Transverse colon (tissue), 4 donors: ENCODE measurements at regions of chr1 and their contacts with region 1.

Region 1: GRCh38 chr1:11838349-11839272 is 9.0 kb downstream of the NPPA start:
- DNase-seq: peak; percentile 71
- H3K4me3 ChIP-seq: no peak overlapping the region
- H3K27ac ChIP-seq: no peak overlapping the region
- H3K4me1 ChIP-seq: no peaks in the 10 kb centered on the region
- H3K27me3 ChIP-seq: no peaks in the 10 kb centered on the region
- CTCF ChIP-seq: peak; percentile 91 to 96 (median 95)
- EP300 ChIP-seq: no peak
- POLR2A ChIP-seq: no peak

Region 2: GRCh38 chr1:10232163-10232562 is 1606.4 kb before region 1 on chr1:
- in situ Hi-C with region 1: no loop called
- intact Hi-C with region 1: loop called (anchors 5 kb)
- DNase-seq: no peak
- H3K4me3 ChIP-seq: no peak overlapping the region
- H3K27ac ChIP-seq: peak overlapping the region in 1 of 4 donors; percentile 29
- H3K4me1 ChIP-seq: peaks cover 0 to 23% (median 5%) of the 10 kb centered on the region in 4 donors
- H3K27me3 ChIP-seq: no peaks in the 10 kb centered on the region
- CTCF ChIP-seq: no peak
- EP300 ChIP-seq: no peak
- POLR2A ChIP-seq: no peak

Region 3: GRCh38 chr1:11893907-11894251 is 55.3 kb after region 1 on chr1:
- in situ Hi-C with region 1: loop called in 1 of 4 experiments (anchors 10 kb)
- intact Hi-C with region 1: loop called (anchors 5 kb)
- DNase-seq: peak; percentile 63
- H3K4me3 ChIP-seq: no peak overlapping the region
- H3K27ac ChIP-seq: no peak overlapping the region
- H3K4me1 ChIP-seq: no peaks in the 10 kb centered on the region
- H3K27me3 ChIP-seq: peaks cover 52% of the 10 kb centered on the region
- CTCF ChIP-seq: peak; percentile 74 to 88 (median 81)
- EP300 ChIP-seq: no peak
- POLR2A ChIP-seq: no peak

Region 4: GRCh38 chr1:11907275-11908094 is 68.9 kb after region 1 on chr1:
- in situ Hi-C with region 1: no loop called
- intact Hi-C with region 1: loop called (anchors 5 kb)
- DNase-seq: peak; percentile 95
- H3K4me3 ChIP-seq: peak overlapping the region in 1 of 4 donors; percentile 67
- H3K27ac ChIP-seq: peak overlapping the region; percentile 93 to 100 (median 98)
- H3K4me1 ChIP-seq: peaks cover 0 to 13% (median 1%) of the 10 kb centered on the region in 4 donors
- H3K27me3 ChIP-seq: no peaks in the 10 kb centered on the region
- CTCF ChIP-seq: peak; percentile 73 to 95 (median 88)
- EP300 ChIP-seq: no peak
- POLR2A ChIP-seq: no peak

Region 5: GRCh38 chr1:11967028-11967547 is 128.5 kb after region 1 on chr1:
- in situ Hi-C with region 1: loop called in 3 of 4 experiments (anchors 25 kb)
- intact Hi-C with region 1: no loop called
- DNase-seq: peak; percentile 59
- H3K4me3 ChIP-seq: no peak overlapping the region
- H3K27ac ChIP-seq: peak overlapping the region in 2 of 4 donors; percentile 9 to 35
- H3K4me1 ChIP-seq: peaks cover 0 to 9% (median 0%) of the 10 kb centered on the region in 4 donors
- H3K27me3 ChIP-seq: no peaks in the 10 kb centered on the region
- CTCF ChIP-seq: peak; percentile 27 to 86 (median 58)
- EP300 ChIP-seq: no peak
- POLR2A ChIP-seq: no peak